GM13977 (cell line): ENCODE measurements at regions of chr6 and their contacts with region 1.

Region 1: GRCh38 chr6:109690737-109691621 is at the starts of genes AK9 and FIG4:
- DNase-seq: peak; percentile 89
- CTCF ChIP-seq: peak; percentile 47

Region 2: DNA sequence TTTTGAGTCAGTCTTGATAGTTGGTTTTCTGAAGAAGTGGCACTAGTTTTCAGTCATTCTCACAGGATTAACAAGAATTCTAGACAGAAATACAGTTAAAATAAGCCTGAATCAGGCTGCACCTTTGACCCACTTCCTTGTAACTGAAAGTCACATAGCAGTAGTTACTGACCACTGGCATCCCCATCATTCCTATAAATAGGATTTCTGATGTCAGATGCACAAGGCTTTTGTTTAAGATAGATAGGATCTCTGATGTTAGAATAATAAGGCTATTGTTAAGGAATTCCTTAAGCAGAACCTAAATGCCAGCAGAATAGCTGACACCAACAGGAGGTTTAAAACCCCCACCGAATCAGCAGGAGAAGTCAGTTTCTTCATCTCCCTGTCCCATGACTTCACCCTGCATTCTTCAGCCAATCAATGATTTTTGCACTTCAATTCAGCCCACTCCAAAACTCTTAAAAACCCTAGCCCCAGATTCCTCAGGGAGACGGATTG is 177.4 kb before region 1 on chr6:
- in situ Hi-C with region 1: loop called (anchors 25 kb)
- DNase-seq: no peak
- CTCF ChIP-seq: no peak

Region 3: DNA sequence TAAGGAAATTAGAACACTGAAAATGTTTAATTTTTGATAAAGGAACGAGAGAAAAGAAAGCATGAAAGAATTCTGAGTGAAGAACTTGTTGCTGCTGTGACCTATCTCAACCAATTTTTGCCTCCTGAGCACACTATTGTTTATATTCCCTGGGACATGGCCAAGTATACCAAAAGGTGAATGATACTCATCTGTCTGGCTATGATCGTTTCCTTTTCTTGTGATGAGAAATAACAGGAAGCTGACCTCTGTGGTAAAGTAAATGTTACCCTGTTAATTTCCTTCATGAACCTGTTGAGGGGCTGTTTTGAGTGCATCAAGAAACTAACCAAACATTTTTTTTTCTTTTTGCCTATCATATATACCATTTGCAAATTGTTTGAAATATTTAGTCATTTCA is 69.2 kb after region 1 on chr6:
- in situ Hi-C with region 1: no loop called
- DNase-seq: no peak
- CTCF ChIP-seq: no peak